ENCODE measurements at regions of chr6 and their contacts with region 1.

Region 1: GRCh38 chr6:21164768-21165326 is 428.7 kb upstream of the SOX4 start:
- DNase-seq: no peak
- ATAC-seq: peak; percentile 78
- H3K4me3 ChIP-seq: no peak overlapping the region
- H3K27ac ChIP-seq: no peak overlapping the region
- H3K4me1 ChIP-seq: peaks cover 8% of the 10 kb centered on the region
- H3K27me3 ChIP-seq: no peaks in the 10 kb centered on the region
- CTCF ChIP-seq: no peak
- EP300 ChIP-seq: peak in 1 of 2 experiments; percentile 38; a peak in 1 of 4 replicates
- POLR2A ChIP-seq: no peak
- RAD21 ChIP-seq: no peak

Region 2: DNA sequence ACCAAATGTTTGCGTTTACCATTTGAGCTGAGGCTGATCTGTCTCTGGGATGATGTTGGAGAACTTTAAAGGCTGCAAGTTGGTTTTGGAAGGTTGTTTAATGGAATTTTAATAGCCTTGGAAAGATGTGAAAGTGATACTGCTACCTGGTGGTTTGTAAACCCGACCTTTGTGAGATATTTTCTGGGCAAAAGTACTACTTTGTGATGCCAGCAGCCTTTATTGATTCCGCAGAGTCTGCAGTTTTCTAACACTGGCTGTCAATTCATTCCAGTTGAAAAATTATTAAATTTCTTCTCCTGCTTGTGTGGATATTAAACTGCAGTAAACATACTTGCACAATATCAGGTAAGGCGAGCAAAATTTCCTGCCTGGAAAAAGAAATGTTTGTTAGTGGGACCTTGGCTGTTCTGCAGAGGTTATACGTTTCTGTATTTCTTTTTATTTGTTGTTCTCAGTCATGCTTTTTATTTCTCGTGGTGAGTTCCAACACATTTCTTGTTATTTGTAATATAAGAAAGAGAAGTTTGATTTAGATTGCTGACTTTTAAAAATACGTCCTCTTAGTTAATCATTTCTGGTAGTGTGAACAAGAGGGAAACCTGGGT is 308.1 kb before region 1 on chr6:
- CTCF ChIA-PET with region 1: no interaction called
- POLR2A ChIA-PET with region 1: no interaction called
- RAD21 ChIA-PET with region 1: no interaction called
- SMC1A ChIA-PET with region 1: no interaction called
- in situ Hi-C with region 1: no loop called
- intact Hi-C with region 1: no loop called
- DNase-seq: no peak
- ATAC-seq: no peak
- H3K4me3 ChIP-seq: no peak overlapping the region
- H3K27ac ChIP-seq: no peak overlapping the region
- H3K4me1 ChIP-seq: no peaks in the 10 kb centered on the region
- H3K27me3 ChIP-seq: no peaks in the 10 kb centered on the region
- CTCF ChIP-seq: no peak
- EP300 ChIP-seq: no peak
- POLR2A ChIP-seq: no peak
- RAD21 ChIP-seq: no peak

Region 3: GRCh38 chr6:20900389-20901160 is 264.3 kb before region 1 on chr6:
- CTCF ChIA-PET with region 1: no interaction called
- POLR2A ChIA-PET with region 1: interaction called, 10 read pairs
- RAD21 ChIA-PET with region 1: no interaction called
- SMC1A ChIA-PET with region 1: no interaction called
- in situ Hi-C with region 1: no loop called
- intact Hi-C with region 1: no loop called
- DNase-seq: no peak
- ATAC-seq: peak; percentile 97
- H3K4me3 ChIP-seq: no peak overlapping the region
- H3K27ac ChIP-seq: peak overlapping the region; percentile 33; the same call in 1 of the 2 replicates
- H3K4me1 ChIP-seq: peaks cover 6% of the 10 kb centered on the region; the same call in 1 of the 2 replicates
- H3K27me3 ChIP-seq: no peaks in the 10 kb centered on the region
- CTCF ChIP-seq: no peak
- EP300 ChIP-seq: peak; percentile 42 to 71; a peak in 3 of 4 replicates
- POLR2A ChIP-seq: no peak
- RAD21 ChIP-seq: no peak

Region 4: GRCh38 chr6:21180155-21180554 is 15.3 kb after region 1 on chr6:
- CTCF ChIA-PET with region 1: interaction called, 6 read pairs
- POLR2A ChIA-PET with region 1: interaction called, 7 read pairs
- RAD21 ChIA-PET with region 1: interaction called, 11 read pairs
- SMC1A ChIA-PET with region 1: interaction called, 26 read pairs
- in situ Hi-C with region 1: no loop called
- intact Hi-C with region 1: no loop called
- DNase-seq: peak; percentile 59
- ATAC-seq: peak; percentile 86
- H3K4me3 ChIP-seq: no peak overlapping the region
- H3K27ac ChIP-seq: peak overlapping the region; percentile 38; the same call in 1 of the 2 replicates
- H3K4me1 ChIP-seq: peaks cover 20% of the 10 kb centered on the region
- H3K27me3 ChIP-seq: no peaks in the 10 kb centered on the region
- CTCF ChIP-seq: no peak
- EP300 ChIP-seq: peak; percentile 79 to 93; a peak in 3 of 4 replicates
- POLR2A ChIP-seq: no peak
- RAD21 ChIP-seq: no peak

Region 5: DNA sequence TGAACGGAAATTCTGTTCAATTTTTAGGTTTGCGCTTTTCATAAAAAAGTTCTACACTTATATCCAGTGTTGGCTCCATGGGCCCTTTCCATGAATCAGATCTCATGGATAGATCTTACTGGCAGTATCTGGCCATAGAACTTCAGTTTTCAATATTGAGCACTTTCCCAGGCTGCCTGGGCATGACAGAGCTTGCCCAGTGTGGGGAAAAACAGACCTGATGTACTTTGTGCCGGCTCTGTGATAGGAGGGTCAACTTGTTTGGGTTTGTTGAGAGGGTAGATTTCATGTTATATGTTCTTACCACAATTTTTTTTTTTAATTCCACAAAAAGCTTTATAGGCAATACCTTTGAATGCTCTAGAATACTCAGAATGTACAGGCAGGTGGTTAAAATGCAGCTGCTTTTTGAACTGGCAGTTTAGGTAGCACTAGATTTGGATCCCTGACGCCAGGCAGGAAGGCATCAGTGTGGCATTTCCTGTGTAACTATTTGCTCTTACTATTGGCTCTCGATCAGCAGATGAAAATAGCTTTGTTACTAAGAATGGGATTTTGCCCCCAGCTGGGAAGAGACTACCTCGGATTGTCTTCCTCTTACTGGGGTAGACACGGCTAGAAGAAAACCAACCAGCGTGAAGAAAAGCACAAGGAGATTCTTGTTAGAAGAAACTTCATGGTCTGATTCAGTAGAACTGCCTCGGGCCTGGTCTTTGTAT is 23.8 kb after region 1 on chr6:
- CTCF ChIA-PET with region 1: interaction called, 4 read pairs
- POLR2A ChIA-PET with region 1: interaction called, 3 read pairs
- RAD21 ChIA-PET with region 1: interaction called, 9 read pairs
- SMC1A ChIA-PET with region 1: interaction called, 10 read pairs
- in situ Hi-C with region 1: no loop called
- intact Hi-C with region 1: no loop called
- DNase-seq: peak; percentile 82
- ATAC-seq: peak; percentile 77
- H3K4me3 ChIP-seq: no peak overlapping the region
- H3K27ac ChIP-seq: peak overlapping the region; percentile 77
- H3K4me1 ChIP-seq: peaks cover 19% of the 10 kb centered on the region
- H3K27me3 ChIP-seq: no peaks in the 10 kb centered on the region
- CTCF ChIP-seq: no peak
- EP300 ChIP-seq: no peak
- POLR2A ChIP-seq: no peak
- RAD21 ChIP-seq: no peak